GM10248 (cell line): ENCODE measurements at regions of chr1 and their contacts with region 1.

Region 1: GRCh38 chr1:204506961-204507387 is 9.2 kb upstream of the MDM4 start:
- DNase-seq: peak; percentile 56
- CTCF ChIP-seq: no peak

Region 2: DNA sequence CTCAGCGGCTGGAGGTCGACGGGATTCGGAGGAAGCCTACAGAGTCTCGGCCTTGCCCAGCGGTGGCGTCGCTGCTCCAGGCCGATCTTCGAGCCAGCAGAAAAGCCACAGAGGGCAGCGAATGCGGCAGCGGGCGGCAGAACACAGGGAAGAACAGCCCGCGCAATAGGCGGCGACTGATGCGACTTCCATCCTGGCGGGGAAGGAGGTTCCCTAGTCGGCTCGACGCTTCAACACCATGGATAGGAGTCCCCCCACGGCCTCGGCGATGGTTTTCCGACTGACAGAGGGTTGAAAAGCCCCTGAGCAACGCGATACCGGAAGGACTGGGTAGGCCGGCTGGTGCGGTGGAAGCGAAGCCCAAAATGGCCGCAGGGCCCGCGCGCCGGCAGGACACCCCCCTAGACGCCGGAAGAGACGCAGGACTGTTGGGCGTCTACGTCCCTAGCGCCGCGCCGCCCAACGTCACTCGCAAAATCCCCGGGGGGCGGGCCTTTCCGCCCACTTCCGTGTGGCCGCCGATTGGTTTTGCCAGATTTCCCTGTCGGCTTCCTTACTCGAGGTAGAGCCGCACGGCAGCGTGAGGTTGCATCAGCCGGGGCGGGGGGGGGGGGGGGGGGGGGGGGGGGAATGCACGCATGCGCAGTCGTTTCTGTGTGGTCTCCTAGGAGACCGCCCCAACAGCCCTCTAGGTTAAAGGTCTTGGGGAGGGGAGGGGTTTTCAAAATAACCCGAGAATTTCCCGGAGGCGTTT is 95.3 kb before region 1 on chr1 and contains the start of gene PPP1R15B:
- CTCF ChIA-PET with region 1: interaction called, 10 read pairs
- POLR2A ChIA-PET with region 1: interaction called, 3 read pairs
- DNase-seq: peak; percentile 97
- CTCF ChIP-seq: no peak

Region 3: GRCh38 chr1:204480515-204480914 is 26.5 kb before region 1 on chr1:
- CTCF ChIA-PET with region 1: interaction called, 69 read pairs
- POLR2A ChIA-PET with region 1: no interaction called
- DNase-seq: peak; percentile 72
- CTCF ChIP-seq: no peak

Region 4: DNA sequence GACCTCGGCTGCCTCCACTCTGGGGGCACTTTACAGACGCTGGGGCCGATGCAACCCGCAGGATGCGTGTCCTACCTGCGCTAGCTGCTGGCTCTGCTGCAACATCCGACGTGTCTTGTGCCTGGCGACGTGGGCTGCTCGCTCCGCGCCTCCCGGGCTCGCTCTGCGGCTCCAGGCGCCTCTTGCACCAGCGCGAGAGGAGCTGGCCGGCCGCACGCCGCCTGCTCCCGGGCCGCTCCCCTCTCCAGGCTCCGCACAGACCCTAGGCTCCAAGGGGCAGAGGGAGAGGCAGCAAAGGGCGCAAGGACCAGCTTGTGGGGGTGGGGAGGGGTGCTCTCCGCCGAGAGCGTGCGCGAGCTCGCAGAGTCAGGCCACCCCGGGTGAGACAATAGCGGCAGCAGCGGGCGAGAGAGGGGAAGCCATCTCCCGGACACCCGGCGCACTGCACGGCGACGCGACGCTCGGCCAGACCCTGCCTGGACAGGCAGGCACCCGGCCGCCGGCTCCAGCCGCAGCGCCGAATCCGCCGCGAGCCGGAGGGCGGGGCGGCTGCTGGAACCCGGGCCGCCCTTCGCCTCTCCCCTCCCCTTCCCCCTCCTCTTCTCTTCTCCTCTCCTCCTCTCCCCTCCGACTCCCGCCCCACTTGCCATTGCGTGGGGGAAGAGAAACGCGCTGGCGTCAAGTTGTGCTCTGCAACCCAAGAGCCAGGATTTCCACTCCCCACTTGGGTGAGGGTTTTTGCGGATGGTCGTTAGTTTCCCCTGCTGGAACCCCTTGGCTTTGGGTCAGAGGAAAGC is 12.5 kb before region 1 on chr1 and contains the start of gene PIK3C2B:
- CTCF ChIA-PET with region 1: interaction called, 115 read pairs
- POLR2A ChIA-PET with region 1: interaction called, 5 read pairs
- DNase-seq: peak; percentile 90
- CTCF ChIP-seq: peak; percentile 47

Region 5: GRCh38 chr1:204726478-204726877 is 219.5 kb after region 1 on chr1:
- CTCF ChIA-PET with region 1: no interaction called
- POLR2A ChIA-PET with region 1: no interaction called
- DNase-seq: no peak
- CTCF ChIP-seq: no peak

Region 6: DNA sequence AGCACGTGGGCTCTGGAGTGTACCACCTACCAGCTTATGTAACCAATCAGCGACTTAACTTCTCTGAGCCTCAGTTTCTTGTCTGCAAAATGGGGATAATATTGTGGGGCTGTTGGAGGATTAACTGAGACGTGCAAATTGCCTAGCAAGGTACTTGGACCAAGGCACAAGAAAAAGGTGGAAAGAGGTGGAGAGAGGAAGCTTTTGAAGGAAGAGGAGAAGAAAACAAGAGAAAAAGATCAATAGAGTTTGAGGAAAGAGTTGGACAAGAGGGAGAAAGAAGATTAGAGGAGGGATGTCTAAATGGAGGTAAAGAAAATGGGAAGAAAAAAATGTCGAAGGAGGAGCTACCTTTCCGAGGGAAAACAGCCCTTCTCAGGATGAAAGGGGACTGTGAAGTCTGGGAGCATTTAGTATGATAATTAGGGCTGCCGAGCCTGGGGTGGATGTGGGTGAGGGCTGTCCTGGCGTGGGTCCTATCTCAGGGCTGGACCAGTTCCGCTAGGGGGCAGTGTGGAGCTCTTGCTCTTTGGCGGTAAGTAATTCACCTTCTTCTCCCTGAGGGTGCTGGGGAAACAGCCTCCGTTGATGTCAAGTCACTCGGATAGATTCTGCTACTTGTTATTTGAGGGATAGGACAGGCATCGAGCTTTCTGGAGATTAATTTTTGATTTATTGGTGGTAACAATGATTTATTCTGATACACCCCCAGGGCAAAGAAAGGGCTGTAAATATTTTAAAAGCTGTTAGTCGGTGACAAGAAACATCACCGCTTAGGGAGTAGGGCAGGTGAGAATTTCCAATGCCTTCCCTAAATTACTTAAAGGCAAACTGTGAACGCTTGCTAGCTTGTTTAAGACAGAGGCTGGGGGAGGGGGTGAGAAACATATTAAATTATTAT is 284.7 kb after region 1 on chr1:
- CTCF ChIA-PET with region 1: no interaction called
- POLR2A ChIA-PET with region 1: no interaction called
- DNase-seq: peak; percentile 74
- CTCF ChIP-seq: peak; percentile 85